Right ventricle myocardium inferior (tissue), 1 donor: ENCODE measurements at regions of chr17 and their contacts with region 1.

Region 1: GRCh38 chr17:76726231-76726775 is at the start of gene JMJD6:
- DNase-seq: peak; percentile 97
- ATAC-seq: peak; percentile 96
- total RNA-seq, gene JMJD6: 62.8 TPM

Region 2: GRCh38 chr17:76737082-76737675 is 10.9 kb after region 1 on chr17 and contains the start of gene SRSF2:
- intact Hi-C with region 1: loop called (anchors 1 kb)
- DNase-seq: peak; percentile 99
- ATAC-seq: peak; percentile 92
- total RNA-seq, gene SRSF2: 74.0 TPM

Region 3: DNA sequence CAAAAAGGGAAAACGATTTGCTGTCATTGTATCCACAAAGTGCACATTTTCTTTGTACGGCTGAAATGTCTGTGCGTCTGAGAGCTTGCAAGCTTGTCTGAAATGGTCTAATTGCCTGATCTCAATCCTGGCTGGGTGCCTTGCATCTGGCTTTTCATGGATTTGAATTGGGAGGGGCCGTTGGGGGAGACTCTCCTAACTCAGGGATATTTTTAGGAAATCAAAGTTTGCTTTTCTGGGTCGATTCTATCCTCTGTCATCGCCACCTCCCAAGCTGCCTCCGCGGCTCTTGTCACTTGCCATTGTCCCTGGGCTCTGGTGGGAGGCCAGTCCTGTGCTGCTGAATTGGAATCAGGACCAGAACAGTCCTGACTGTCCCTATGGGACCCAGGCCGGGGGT is 108.6 kb after region 1 on chr17:
- intact Hi-C with region 1: no loop called
- DNase-seq: no peak
- ATAC-seq: no peak

Region 4: DNA sequence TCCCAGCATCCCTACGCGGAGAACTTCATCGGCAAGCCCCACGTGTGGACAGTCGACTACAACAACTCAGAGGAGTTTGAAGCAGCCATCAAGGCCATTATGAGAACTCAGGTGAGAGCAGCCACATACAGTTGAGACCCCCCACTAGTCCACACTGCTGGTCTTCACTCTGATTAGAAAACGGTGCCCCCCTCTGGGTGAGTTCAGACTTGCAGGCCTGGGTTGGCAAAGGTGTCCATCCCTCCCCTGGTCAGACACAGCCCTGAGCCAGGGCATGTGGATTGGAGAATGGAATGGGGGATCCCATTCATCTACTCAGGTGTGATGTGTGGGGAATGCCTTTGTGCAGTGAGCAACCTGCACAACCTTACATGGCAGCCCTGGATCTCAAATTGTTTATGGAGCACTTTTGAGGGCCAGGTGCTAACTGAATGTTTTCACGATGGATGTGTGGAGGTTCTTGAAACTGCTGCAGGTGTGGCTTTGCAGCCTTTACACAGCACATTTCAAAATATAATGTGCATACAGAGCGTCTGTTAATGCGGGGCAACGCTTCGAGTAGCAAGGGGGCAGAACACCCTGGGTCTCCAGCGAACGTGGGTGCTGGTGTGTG is 214.5 kb after region 1 on chr17:
- intact Hi-C with region 1: no loop called
- DNase-seq: no peak
- ATAC-seq: no peak